Naive thymus-derived CD4-positive, alpha-beta T cell (primary cell): ENCODE measurements at regions of chr10 and their contacts with region 1.

Region 1: GRCh38 chr10:112314822-112315474 is 31.7 kb downstream of the TECTB start:
- DNase-seq: peak; percentile 32 to 70 (median 53)
- ATAC-seq: peak; percentile 85
- H3K4me3 ChIP-seq: no peak overlapping the region
- H3K4me3 Mint-ChIP-seq: no peak overlapping the region
- H3K27ac ChIP-seq: no peak overlapping the region
- H3K27ac Mint-ChIP-seq: no peak overlapping the region
- H3K4me1 ChIP-seq: no peaks in the 10 kb centered on the region
- H3K4me1 Mint-ChIP-seq: peaks cover 0 to 2% (median 0%) of the 10 kb centered on the region in 7 donors
- H3K27me3 ChIP-seq: no peaks in the 10 kb centered on the region
- H3K27me3 Mint-ChIP-seq: peaks cover 25 to 42% (median 33%) of the 10 kb centered on the region in 5 donors

Region 2: GRCh38 chr10:111944331-111944730 is 370.6 kb before region 1 on chr10:
- CTCF ChIA-PET with region 1: no interaction called
- POLR2A ChIA-PET with region 1: no interaction called
- intact Hi-C with region 1: no loop called
- DNase-seq: no peak
- ATAC-seq: no peak
- H3K4me3 ChIP-seq: no peak overlapping the region
- H3K4me3 Mint-ChIP-seq: no peak overlapping the region
- H3K27ac ChIP-seq: no peak overlapping the region
- H3K27ac Mint-ChIP-seq: no peak overlapping the region
- H3K4me1 ChIP-seq: no peaks in the 10 kb centered on the region
- H3K4me1 Mint-ChIP-seq: no peaks in the 10 kb centered on the region
- H3K27me3 ChIP-seq: no peaks in the 10 kb centered on the region
- H3K27me3 Mint-ChIP-seq: peaks cover 0 to 22% (median 13%) of the 10 kb centered on the region in 5 donors

Region 3: DNA sequence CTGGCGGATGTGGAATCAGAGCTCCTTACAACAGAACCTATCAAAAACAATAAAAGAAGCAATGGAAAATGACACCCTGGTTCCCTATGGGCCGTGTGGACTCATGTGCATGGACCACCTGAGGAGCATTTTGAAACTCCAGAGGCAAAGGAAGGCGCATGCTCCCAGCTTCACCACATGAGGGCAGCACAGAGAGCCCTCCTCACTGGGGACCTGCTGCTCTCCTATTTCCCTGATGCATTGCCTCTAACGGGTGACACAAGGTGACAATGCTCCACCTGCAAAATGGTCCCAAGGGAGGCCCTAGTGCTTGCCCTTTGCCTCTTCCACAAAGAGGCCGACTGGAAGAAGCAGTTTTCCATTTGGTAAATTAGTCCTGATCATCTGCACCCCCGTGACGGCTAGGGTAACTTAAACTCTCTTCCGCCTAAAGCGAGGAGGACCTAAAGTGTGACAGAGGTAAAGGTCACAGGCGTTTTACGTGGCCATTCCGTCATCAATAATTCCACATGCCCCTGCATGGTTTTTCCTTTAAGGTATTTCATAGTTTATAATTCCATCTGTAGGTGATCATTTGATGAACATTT is 199.1 kb before region 1 on chr10:
- CTCF ChIA-PET with region 1: interaction called, 4 read pairs
- POLR2A ChIA-PET with region 1: no interaction called
- intact Hi-C with region 1: loop called in 1 of 2 experiments (anchors 2 kb)
- DNase-seq: peak in 6 of 9 donors; percentile 14 to 35 (median 22)
- ATAC-seq: peak; percentile 70
- H3K4me3 ChIP-seq: no peak overlapping the region
- H3K4me3 Mint-ChIP-seq: no peak overlapping the region
- H3K27ac ChIP-seq: no peak overlapping the region
- H3K27ac Mint-ChIP-seq: no peak overlapping the region
- H3K4me1 ChIP-seq: no peaks in the 10 kb centered on the region
- H3K4me1 Mint-ChIP-seq: peaks cover 0 to 2% (median 0%) of the 10 kb centered on the region in 7 donors
- H3K27me3 ChIP-seq: no peaks in the 10 kb centered on the region
- H3K27me3 Mint-ChIP-seq: peaks cover 0 to 5% (median 0%) of the 10 kb centered on the region in 5 donors

Region 4: GRCh38 chr10:112140110-112140970 is 174.6 kb before region 1 on chr10:
- CTCF ChIA-PET with region 1: no interaction called
- POLR2A ChIA-PET with region 1: no interaction called
- intact Hi-C with region 1: loop called in 1 of 2 experiments (anchors 1 kb)
- DNase-seq: peak; percentile 15 to 72 (median 43)
- ATAC-seq: peak; percentile 87
- H3K4me3 ChIP-seq: no peak overlapping the region
- H3K4me3 Mint-ChIP-seq: no peak overlapping the region
- H3K27ac ChIP-seq: no peak overlapping the region
- H3K27ac Mint-ChIP-seq: no peak overlapping the region
- H3K4me1 ChIP-seq: no peaks in the 10 kb centered on the region
- H3K4me1 Mint-ChIP-seq: peaks cover 0 to 4% (median 0%) of the 10 kb centered on the region in 7 donors
- H3K27me3 ChIP-seq: no peaks in the 10 kb centered on the region
- H3K27me3 Mint-ChIP-seq: peaks cover 0 to 9% (median 0%) of the 10 kb centered on the region in 5 donors

Region 5: DNA sequence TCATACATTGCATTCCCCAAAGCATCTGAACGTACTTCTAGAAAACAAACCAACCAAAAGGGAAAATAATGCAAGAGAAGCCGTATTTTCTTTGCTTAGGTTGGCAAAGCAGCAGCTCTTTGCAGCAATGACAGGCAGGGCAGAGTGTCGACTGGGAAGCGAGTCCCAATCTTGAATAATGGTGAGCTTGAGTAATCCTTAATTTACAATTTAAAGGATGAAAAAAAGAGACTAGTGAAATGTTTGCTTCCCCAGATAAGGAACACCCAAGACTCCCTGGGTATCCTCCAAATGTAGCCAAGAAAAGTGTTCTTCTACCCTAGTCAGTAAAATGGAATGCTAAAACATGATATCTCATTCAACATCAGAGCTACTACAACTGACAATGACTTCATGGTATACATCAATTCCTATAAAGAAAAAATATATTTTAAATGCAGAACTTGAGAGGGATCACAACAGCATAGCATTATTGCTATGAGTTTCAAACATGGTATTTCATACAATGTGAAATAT is 163.4 kb before region 1 on chr10:
- CTCF ChIA-PET with region 1: no interaction called
- POLR2A ChIA-PET with region 1: no interaction called
- intact Hi-C with region 1: loop called in 1 of 2 experiments (anchors 10 kb)
- DNase-seq: no peak
- ATAC-seq: no peak
- H3K4me3 ChIP-seq: no peak overlapping the region
- H3K4me3 Mint-ChIP-seq: no peak overlapping the region
- H3K27ac ChIP-seq: no peak overlapping the region
- H3K27ac Mint-ChIP-seq: no peak overlapping the region
- H3K4me1 ChIP-seq: no peaks in the 10 kb centered on the region
- H3K4me1 Mint-ChIP-seq: no peaks in the 10 kb centered on the region
- H3K27me3 ChIP-seq: no peaks in the 10 kb centered on the region
- H3K27me3 Mint-ChIP-seq: no peaks in the 10 kb centered on the region

Region 6: DNA sequence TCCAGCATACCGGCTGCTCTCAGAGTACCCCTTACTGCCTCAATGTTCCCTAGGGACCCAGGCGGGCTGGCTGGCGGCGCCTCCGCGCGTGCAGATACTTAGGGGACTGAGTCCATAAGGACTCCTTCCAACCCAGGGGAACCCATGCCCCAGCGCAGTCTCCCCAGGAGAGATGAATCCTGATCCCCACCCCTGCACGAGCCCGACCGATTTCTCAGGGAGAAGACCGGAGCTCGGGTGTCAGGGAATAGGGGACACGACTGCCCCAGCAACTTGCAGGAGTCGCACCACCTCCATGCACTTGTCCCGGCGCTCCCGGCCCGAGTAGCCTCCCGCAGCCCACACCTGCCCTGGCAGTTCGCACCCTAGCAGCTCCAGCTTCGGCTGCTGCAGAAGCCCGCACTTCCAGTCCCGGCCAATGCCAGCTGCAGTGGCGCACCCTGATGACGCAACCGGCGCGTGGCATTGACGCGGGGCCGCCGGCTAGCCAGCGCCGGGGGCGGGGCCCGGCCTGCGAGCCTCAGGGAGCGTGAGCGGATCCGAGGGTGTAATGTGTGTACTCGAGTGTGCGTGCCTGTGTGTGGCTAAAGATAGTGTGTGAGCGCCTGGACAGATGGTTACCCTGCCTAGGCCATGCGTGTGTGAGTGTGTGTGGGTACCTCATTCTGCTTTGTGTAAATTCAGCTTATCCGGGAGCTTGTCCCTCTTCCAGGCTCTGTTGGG is 131.5 kb before region 1 on chr10 and contains the start of gene GPAM:
- CTCF ChIA-PET with region 1: no interaction called
- POLR2A ChIA-PET with region 1: no interaction called
- intact Hi-C with region 1: loop called in 1 of 2 experiments (anchors 5 kb)
- DNase-seq: peak; percentile 93 to 100 (median 97)
- ATAC-seq: peak; percentile 100
- H3K4me3 ChIP-seq: peak within 1 kb of the TSS; percentile 88
- H3K4me3 Mint-ChIP-seq: peak within 1 kb of the TSS; percentile 87 to 98 (median 92)
- H3K27ac ChIP-seq: peak within 1 kb of the TSS; percentile 75
- H3K27ac Mint-ChIP-seq: peak within 1 kb of the TSS; percentile 84 to 99 (median 94)
- H3K4me1 ChIP-seq: peaks cover 7 to 8% of the 10 kb centered on the region in 2 donors
- H3K4me1 Mint-ChIP-seq: peaks cover 13 to 34% (median 27%) of the 10 kb centered on the region in 7 donors
- H3K27me3 ChIP-seq: no peaks in the 10 kb centered on the region
- H3K27me3 Mint-ChIP-seq: peaks cover 0 to 11% (median 0%) of the 10 kb centered on the region in 5 donors
- total RNA-seq, gene GPAM: 3.7 to 11.3 (median 6.6) TPM

Region 7: GRCh38 chr10:112269266-112269665 is 45.7 kb before region 1 on chr10:
- CTCF ChIA-PET with region 1: no interaction called
- POLR2A ChIA-PET with region 1: no interaction called
- intact Hi-C with region 1: no loop called
- DNase-seq: no peak
- ATAC-seq: no peak
- H3K4me3 ChIP-seq: no peak overlapping the region
- H3K4me3 Mint-ChIP-seq: no peak overlapping the region
- H3K27ac ChIP-seq: no peak overlapping the region
- H3K27ac Mint-ChIP-seq: no peak overlapping the region
- H3K4me1 ChIP-seq: no peaks in the 10 kb centered on the region
- H3K4me1 Mint-ChIP-seq: no peaks in the 10 kb centered on the region
- H3K27me3 ChIP-seq: no peaks in the 10 kb centered on the region
- H3K27me3 Mint-ChIP-seq: peaks cover 0 to 15% (median 11%) of the 10 kb centered on the region in 5 donors

Region 8: DNA sequence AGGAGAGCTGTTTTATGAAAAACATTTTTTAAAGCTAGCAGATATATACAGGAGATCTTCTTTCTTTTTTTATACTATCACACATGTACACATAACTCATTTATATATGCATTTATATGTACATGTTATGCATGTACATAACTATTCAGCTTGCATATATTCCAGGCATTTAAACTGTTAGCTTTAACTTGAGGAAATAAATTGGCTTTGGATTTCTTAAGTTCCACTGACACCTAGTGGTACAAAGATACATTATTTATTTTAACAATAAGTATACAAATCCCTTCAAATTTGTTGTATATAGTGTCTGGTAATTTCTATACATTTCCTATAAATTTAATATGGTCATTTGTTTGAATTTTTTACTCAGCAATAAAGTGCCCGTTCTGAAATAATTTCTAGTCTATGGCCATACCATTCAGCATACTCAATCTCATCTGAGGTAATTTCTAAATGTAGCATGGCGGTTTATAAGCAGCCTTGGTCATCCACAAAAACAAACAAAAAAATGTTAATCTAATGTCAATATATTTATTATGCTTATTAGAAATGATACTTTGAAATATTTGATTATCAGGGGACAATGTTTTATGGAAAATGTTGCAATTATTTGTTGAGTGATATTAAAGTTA is 120.2 kb after region 1 on chr10:
- CTCF ChIA-PET with region 1: no interaction called
- POLR2A ChIA-PET with region 1: no interaction called
- intact Hi-C with region 1: loop called (anchors 1 to 2 kb)
- DNase-seq: peak in 2 of 9 donors; percentile 5 to 27
- ATAC-seq: no peak
- H3K4me3 ChIP-seq: no peak overlapping the region
- H3K4me3 Mint-ChIP-seq: no peak overlapping the region
- H3K27ac ChIP-seq: no peak overlapping the region
- H3K27ac Mint-ChIP-seq: peak overlapping the region in 1 of 9 donors; percentile 78
- H3K4me1 ChIP-seq: no peaks in the 10 kb centered on the region
- H3K4me1 Mint-ChIP-seq: peaks cover 0 to 5% (median 3%) of the 10 kb centered on the region in 7 donors
- H3K27me3 ChIP-seq: no peaks in the 10 kb centered on the region
- H3K27me3 Mint-ChIP-seq: no peaks in the 10 kb centered on the region